ENCODE measurements at regions of chr5 and their contacts with region 1.

Region 1: DNA sequence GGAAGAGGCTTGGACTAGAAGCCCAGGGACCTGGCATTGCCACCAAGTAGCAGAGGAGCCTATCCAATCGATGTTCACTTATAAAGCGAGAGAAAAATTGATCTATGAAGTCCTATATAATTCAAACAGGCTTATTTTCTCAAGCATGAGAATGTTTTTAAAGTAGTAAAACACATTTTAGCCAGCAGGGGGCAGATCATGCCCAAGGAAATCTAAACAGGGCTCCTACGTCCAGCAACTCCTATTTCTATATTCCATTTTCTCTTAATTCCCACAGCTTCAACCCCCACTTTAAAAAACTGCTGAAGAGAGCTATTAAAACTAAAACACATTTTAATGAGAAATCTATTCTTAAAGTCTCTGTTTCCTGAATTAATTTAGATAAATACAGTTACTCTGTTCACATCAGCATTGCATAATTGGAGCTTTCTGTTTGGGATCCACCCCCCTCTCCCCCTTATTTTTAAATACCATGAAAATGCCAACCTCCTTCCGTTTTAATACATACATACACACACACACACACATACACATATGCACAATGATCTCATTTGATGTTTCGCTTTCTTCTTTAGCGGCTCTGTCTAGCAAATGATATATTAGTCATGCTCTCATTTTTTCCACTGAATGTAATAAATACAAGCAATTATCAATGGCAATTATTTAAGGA is 144.9 kb downstream of the MYO10 start:
- DNase-seq: no peak
- H3K4me3 ChIP-seq: no peak overlapping the region
- H3K27ac ChIP-seq: no peak overlapping the region
- H3K4me1 ChIP-seq: peaks cover 0 to 6% (median 2%) of the 10 kb centered on the region in 4 donors
- H3K27me3 ChIP-seq: no peaks in the 10 kb centered on the region
- CTCF ChIP-seq: peak; percentile 70 to 79

Region 2: DNA sequence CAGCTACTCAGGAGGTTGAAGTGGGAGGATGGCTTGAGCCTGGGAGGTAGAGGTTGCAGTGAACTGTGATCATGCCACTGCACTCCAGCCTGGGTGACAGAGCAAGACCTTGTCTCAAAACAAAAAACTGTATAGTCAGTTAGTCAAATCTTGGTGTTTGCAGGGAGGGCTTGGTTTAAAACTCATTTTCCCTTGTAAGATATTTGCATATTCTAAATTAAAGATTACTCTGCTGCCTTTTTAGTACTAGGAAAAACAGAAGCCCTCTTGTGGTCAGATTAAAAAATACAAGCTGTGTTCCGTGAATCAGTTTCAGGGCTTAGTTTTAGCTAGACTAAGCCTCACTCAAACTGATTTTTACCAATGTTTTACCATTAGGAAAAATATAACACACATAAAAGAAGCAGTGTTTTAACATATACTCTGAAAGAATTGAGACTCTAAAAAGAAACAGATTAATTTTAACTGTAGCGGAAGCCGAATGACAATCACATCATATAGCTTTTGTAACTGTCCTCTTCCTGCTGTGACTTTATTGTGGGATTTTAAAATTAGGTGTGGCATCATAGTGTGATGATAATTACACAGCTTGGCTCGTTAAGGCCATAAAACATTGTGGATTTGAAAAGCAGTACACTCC is 341.4 kb after region 1 on chr5:
- intact Hi-C with region 1: loop called (anchors 2 kb)
- DNase-seq: no peak
- H3K4me3 ChIP-seq: no peak overlapping the region
- H3K27ac ChIP-seq: no peak overlapping the region
- H3K4me1 ChIP-seq: peaks cover 0 to 26% (median 3%) of the 10 kb centered on the region in 4 donors
- H3K27me3 ChIP-seq: no peaks in the 10 kb centered on the region
- CTCF ChIP-seq: peak; percentile 64 to 69